Left cardiac atrium (tissue), 4 donors: ENCODE measurements at regions of chr2 and their contacts with region 1.

Region 1: GRCh38 chr2:16553226-16553625 is 112.4 kb downstream of the CYRIA start:
- DNase-seq: peak; percentile 28
- ATAC-seq: no peak

Region 2: DNA sequence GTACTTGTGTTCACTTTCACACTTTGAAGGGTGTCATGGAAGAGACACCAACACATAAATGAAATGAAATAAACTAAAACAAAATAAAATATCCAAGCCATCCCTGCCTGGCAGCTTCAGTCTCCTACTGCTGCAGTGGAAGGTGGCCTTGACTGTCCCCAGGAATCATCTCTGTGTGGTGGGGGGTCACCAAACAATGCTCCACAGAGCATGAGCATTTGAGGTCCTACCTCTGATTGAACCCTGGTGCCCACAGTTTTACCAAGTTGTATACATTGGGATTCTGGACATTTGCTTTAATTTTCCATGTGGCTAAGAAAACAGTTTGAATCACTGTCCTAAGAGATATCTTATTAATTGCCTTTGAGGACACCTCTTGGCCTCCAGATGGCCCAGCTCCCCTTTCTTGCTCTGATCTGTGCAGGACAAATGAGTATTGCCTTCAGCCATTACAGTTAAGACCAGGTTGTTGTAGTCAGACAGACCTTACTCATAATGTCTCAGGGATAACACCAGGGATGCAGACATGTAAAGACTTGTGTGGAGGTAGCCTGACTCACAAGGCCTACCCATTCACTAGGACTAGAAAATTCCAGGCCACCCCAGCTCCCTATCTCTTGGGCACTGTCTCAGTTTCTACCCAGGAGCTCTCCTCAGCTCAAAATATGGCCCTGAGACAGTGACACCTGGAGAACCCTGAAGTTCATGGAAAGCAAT is 417.9 kb before region 1 on chr2:
- intact Hi-C with region 1: no loop called
- DNase-seq: no peak
- ATAC-seq: no peak

Region 3: GRCh38 chr2:16417726-16418125 is 135.5 kb before region 1 on chr2:
- intact Hi-C with region 1: no loop called
- DNase-seq: no peak
- ATAC-seq: no peak

Region 4: DNA sequence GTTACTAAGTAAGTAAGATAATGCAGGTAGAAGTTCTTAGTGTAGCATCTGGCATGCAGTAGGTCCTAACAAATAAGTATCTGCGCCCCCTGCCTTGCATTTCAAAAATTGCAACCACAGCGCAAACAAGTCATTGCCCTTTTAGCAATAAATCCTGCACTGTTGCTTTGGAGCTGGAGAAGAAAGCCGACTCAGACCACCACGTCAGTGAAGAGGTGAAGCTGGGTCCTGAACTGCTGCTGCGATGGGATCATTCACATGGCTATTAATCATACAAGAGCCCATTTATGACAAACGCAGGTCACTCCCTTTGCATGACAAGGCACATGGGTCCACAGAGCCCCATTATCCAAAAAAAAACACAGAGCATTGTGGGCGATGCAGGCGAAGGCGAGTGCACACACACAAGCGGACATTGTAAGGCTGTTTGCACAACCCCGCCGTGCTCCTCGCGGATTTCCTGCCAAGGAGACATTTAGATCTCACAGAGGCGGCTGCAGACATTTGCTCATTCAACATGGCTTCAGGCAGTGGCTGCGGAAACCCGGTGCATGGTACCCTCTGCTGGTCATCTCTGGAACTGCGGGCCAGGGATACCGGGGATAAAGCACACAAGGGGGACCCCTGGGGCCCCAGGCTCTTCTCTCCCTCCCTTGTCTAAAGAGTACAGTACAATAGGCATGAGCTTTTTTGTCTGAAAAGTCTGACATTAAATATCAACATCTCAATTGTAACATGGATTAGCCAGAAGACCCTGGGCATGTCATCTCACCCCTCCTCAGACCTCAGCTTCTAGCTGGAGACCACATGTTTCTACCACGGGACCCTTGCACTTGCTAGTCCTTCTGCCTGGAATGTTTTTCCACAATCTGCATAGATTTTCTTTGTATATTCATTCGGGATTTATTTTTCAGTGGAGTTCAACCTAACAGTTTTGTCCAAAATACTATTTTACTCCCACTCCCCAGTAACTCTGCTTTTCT is 55.7 kb after region 1 on chr2:
- intact Hi-C with region 1: loop called (anchors 1 to 5 kb)
- DNase-seq: peak; percentile 86
- ATAC-seq: peak; percentile 88 to 90